ENCODE measurements at regions of chr11 and their contacts with region 1.

Region 1: DNA sequence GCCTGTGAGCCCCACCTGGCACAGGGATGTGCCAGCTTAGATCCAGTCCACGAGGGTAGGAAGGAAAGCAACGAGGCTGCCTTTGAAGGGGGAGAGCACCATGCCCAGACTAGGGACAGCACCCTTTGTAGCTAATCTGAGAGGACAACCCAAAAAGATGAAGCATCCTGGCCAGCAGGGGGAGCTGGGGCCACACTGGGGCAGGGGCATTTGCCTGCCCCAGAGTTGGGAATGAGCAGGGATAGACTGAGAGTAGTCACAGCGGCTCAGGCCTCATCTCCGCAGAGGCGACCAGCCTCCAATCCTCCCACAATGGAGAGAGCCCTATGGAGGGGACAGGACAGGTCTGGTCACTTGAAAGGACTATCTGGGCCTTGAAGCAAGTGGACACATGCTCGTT is 16.4 kb downstream of the LMO1 start:
- DNase-seq: peak in 1 of 2 experiments; percentile 75
- H3K4me3 ChIP-seq: no peak overlapping the region
- H3K27ac ChIP-seq: no peak overlapping the region
- H3K4me1 ChIP-seq: peaks cover 7 to 16% (median 11%) of the 10 kb centered on the region in 4 experiments; a peak in 6 of 7 replicates
- H3K27me3 ChIP-seq: peaks cover 0 to 1% (median 0%) of the 10 kb centered on the region in 4 experiments; a peak in 1 of 7 replicates
- CTCF ChIP-seq: peak; percentile 65 to 77 (median 71)
- EP300 ChIP-seq: no peak
- POLR2A ChIP-seq: no peak
- RAD21 ChIP-seq: peak; percentile 64 to 68

Region 2: GRCh38 chr11:8219257-8220021 is 27.9 kb before region 1 on chr11:
- CTCF ChIA-PET with region 1: interaction called, 171 read pairs
- POLR2A ChIA-PET with region 1: no interaction called
- DNase-seq: peak in 1 of 2 experiments; percentile 73
- H3K4me3 ChIP-seq: no peak overlapping the region
- H3K27ac ChIP-seq: no peak overlapping the region
- H3K4me1 ChIP-seq: peaks cover 0 to 2% (median 0%) of the 10 kb centered on the region in 4 experiments; a peak in 1 of 7 replicates
- H3K27me3 ChIP-seq: no peaks in the 10 kb centered on the region; a peak in 1 of 7 replicates
- CTCF ChIP-seq: peak; percentile 70 to 78 (median 73)
- EP300 ChIP-seq: no peak
- POLR2A ChIP-seq: no peak
- RAD21 ChIP-seq: peak; percentile 42 to 64

Region 3: DNA sequence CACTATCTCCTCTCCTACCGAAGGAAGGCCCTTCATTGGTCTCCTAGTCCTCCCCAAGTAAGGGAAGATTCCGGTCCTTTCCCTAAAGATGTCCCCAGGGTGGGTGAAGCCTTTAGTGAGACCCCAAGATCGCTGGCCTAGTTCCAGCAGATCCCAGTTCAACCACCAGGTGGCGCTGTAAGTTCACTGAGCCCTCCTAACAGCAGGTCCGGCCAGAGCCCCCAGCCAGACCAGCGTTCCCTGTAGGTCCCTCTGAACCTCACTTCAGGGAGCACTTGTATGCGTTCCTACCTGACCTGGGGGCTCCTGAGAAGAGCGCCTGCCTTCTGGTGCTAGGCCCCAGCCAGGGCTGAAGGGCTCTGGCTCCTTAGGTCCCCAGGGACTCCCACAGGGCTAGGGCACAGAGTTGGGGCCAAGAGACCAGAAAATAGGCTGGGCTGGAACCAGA is 21.7 kb before region 1 on chr11:
- CTCF ChIA-PET with region 1: interaction called, 177 read pairs
- POLR2A ChIA-PET with region 1: no interaction called
- DNase-seq: peak; percentile 86 to 98
- H3K4me3 ChIP-seq: no peak overlapping the region
- H3K27ac ChIP-seq: no peak overlapping the region
- H3K4me1 ChIP-seq: peaks cover 0 to 14% (median 3%) of the 10 kb centered on the region in 4 experiments; a peak in 4 of 7 replicates
- H3K27me3 ChIP-seq: no peaks in the 10 kb centered on the region; a peak in 1 of 7 replicates
- CTCF ChIP-seq: peak; percentile 90 to 98 (median 97)
- EP300 ChIP-seq: no peak
- POLR2A ChIP-seq: no peak
- RAD21 ChIP-seq: peak; percentile 98 to 99

Region 4: DNA sequence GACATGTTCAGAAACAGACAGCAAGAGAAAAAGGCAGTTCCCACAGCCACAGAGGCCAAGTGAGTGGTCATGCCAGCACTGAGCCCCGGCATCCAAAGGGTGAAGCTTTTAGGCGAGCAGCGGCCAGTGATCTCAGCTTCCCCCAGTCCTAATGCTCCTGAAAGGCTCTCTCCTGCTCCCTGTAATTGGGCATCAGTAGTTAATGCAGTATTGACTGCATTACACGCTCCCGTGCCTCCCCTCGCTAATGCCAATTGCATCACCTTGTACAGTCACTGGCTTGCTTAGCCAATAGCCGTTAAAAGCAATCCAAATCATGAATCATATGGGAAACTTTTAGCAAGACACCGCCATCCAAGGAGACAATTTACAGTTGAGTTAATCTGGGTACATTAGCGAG is 11.5 kb after region 1 on chr11:
- CTCF ChIA-PET with region 1: interaction called, 78 read pairs
- POLR2A ChIA-PET with region 1: interaction called, 5 read pairs
- DNase-seq: peak in 1 of 2 experiments; percentile 35
- H3K4me3 ChIP-seq: no peak overlapping the region
- H3K27ac ChIP-seq: no peak overlapping the region
- H3K4me1 ChIP-seq: peaks cover 0 to 8% (median 5%) of the 10 kb centered on the region in 4 experiments; a peak in 5 of 7 replicates
- H3K27me3 ChIP-seq: peaks cover 19 to 35% (median 30%) of the 10 kb centered on the region in 4 experiments
- CTCF ChIP-seq: no peak
- EP300 ChIP-seq: no peak
- POLR2A ChIP-seq: no peak
- RAD21 ChIP-seq: no peak

Region 5: GRCh38 chr11:8283465-8284230 is 36.3 kb after region 1 on chr11:
- CTCF ChIA-PET with region 1: interaction called, 11 read pairs
- POLR2A ChIA-PET with region 1: interaction called, 3 read pairs
- DNase-seq: peak in 1 of 2 experiments; percentile 74
- H3K4me3 ChIP-seq: peak overlapping the region; percentile 6 to 64 (median 40)
- H3K27ac ChIP-seq: no peak overlapping the region
- H3K4me1 ChIP-seq: peaks cover 0 to 11% (median 8%) of the 10 kb centered on the region in 4 experiments; a peak in 6 of 7 replicates
- H3K27me3 ChIP-seq: peaks cover 0 to 10% (median 0%) of the 10 kb centered on the region in 4 experiments; a peak in 4 of 7 replicates
- CTCF ChIP-seq: no peak
- EP300 ChIP-seq: no peak
- POLR2A ChIP-seq: no peak
- RAD21 ChIP-seq: no peak

Measured in H1 (cell line).